PC-3 (cell line): ENCODE measurements at regions of chr14 and their contacts with region 1.

Region 1: GRCh38 chr14:31159682-31160296 is 47.8 kb downstream of the HECTD1 start:
- DNase-seq: peak; percentile 82
- ATAC-seq: peak; percentile 79
- H3K4me3 ChIP-seq: no peak overlapping the region
- H3K27ac ChIP-seq: peak overlapping the region; percentile 49
- H3K4me1 ChIP-seq: peaks cover 30% of the 10 kb centered on the region
- H3K27me3 ChIP-seq: no peaks in the 10 kb centered on the region
- CTCF ChIP-seq: no peak

Region 2: GRCh38 chr14:30204431-30204980 is 955.3 kb before region 1 on chr14:
- CTCF ChIA-PET with region 1: no interaction called
- POLR2A ChIA-PET with region 1: no interaction called
- intact Hi-C with region 1: no loop called
- DNase-seq: no peak
- ATAC-seq: no peak
- H3K4me3 ChIP-seq: no peak overlapping the region
- H3K27ac ChIP-seq: no peak overlapping the region
- H3K4me1 ChIP-seq: no peaks in the 10 kb centered on the region
- H3K27me3 ChIP-seq: no peaks in the 10 kb centered on the region
- CTCF ChIP-seq: no peak

Region 3: DNA sequence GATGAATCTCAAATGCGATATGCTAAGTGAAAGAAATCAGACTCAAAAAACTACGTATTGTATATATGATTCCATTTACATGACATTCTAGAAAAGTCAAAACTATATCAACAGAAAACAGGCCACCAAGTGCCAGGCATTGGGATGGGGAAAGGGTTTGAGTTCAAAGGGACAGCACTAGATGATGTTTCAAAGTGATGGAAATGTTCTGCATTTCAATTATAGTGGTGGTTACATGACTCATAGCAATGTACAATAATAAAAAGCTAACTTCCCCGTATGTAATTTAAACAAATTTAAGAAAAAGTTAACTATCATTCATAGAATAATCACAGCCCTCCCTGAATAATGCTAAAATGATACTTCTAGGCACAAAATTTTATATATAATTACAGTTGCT is 34.3 kb after region 1 on chr14:
- CTCF ChIA-PET with region 1: no interaction called
- POLR2A ChIA-PET with region 1: interaction called, 6 read pairs
- intact Hi-C with region 1: loop called (anchors 5 kb)
- DNase-seq: peak; percentile 34
- ATAC-seq: peak; percentile 16; the same call in 1 of the 2 replicates
- H3K4me3 ChIP-seq: no peak overlapping the region
- H3K27ac ChIP-seq: peak overlapping the region; percentile 81
- H3K4me1 ChIP-seq: peaks cover 49% of the 10 kb centered on the region
- H3K27me3 ChIP-seq: no peaks in the 10 kb centered on the region
- CTCF ChIP-seq: no peak

Region 4: DNA sequence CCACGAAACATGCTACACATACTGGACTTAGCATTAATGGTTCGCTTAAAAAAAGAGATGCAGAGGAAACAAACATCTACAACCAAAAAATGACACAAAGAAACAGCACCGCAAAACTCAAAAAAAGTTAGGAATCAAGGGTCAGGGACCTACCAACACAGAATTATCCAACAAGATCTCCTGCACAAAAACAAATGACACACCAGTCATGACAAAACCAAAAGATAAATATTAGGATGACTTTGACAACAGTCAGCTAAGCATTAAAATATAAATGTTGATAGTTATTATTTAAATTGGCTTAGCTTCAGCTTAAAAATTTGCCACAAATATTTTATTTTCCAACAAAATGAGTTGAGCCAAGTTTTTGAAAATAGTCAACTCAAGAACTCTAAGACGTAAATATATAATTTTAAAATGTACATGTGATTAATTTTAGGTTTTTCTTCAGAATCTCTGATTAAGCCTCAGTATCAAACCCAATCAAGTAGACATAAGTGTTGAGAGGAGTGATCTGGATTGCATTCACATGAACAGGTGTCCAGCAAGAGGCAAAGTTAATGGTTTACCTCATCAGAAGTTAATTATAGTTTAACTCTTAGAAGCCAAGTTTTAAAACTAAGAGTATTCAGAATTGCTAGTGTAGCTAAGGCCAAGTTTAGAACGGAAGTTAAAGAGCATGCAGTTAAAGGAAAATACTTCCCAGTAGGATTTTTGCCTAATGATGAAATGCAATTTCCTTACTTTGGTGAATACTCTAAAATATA is 180.7 kb after region 1 on chr14:
- CTCF ChIA-PET with region 1: no interaction called
- POLR2A ChIA-PET with region 1: no interaction called
- intact Hi-C with region 1: loop called (anchors 1 kb)
- DNase-seq: peak; percentile 66
- ATAC-seq: peak; percentile 83
- H3K4me3 ChIP-seq: no peak overlapping the region; the same call in 1 of the 2 replicates
- H3K27ac ChIP-seq: peak overlapping the region; percentile 70
- H3K4me1 ChIP-seq: peaks cover 33% of the 10 kb centered on the region
- H3K27me3 ChIP-seq: no peaks in the 10 kb centered on the region
- CTCF ChIP-seq: no peak

Region 5: DNA sequence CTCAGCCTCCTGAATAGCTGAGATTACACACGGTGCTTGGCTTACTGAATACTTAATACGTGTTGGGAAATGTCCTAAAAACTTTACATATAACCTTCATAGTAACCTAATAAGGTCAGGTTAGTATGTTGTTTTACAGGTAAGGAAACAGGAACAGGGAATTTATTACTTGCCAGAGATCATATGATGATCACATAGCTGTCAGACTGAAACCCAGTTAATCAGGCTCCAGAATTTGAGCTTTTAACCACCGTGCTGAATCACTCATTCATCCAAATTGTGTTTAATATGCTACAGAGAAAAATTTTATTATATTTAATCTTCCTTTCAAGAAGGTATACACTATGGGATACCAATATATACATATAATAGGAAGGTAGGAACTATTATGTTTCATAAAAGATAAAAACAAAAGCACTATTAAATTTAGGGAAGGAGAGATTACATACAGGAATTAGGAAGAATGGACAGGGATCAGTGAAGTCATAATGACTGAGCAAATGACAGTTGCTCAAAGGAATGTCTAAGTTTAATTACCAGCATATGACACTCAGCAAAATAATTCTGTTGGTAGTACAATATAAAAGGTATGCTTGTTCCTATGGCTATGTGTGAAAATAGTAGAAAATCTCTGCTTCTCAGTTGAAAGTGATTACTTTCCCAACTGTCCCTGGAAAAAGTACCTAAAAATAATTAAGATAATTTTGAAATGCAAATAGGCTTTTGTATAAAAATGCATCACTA is 201.3 kb after region 1 on chr14:
- CTCF ChIA-PET with region 1: no interaction called
- POLR2A ChIA-PET with region 1: no interaction called
- intact Hi-C with region 1: loop called (anchors 2 kb)
- DNase-seq: peak; percentile 75
- ATAC-seq: peak; percentile 82
- H3K4me3 ChIP-seq: no peak overlapping the region
- H3K27ac ChIP-seq: peak overlapping the region; percentile 15
- H3K4me1 ChIP-seq: peaks cover 29% of the 10 kb centered on the region
- H3K27me3 ChIP-seq: no peaks in the 10 kb centered on the region
- CTCF ChIP-seq: no peak